ENCODE measurements at regions of chr17 and their contacts with region 1.

Region 1: GRCh38 chr17:40615295-40615988 is 32.2 kb downstream of the SMARCE1 start:
- DNase-seq: peak; percentile 59
- ATAC-seq: peak; percentile 58

Region 2: GRCh38 chr17:40791787-40792436 is 176.5 kb after region 1 on chr17:
- intact Hi-C with region 1: loop called (anchors 5 kb)
- DNase-seq: no peak
- ATAC-seq: peak; percentile 69